ENCODE measurements at regions of chr2 and their contacts with region 1.

Region 1: DNA sequence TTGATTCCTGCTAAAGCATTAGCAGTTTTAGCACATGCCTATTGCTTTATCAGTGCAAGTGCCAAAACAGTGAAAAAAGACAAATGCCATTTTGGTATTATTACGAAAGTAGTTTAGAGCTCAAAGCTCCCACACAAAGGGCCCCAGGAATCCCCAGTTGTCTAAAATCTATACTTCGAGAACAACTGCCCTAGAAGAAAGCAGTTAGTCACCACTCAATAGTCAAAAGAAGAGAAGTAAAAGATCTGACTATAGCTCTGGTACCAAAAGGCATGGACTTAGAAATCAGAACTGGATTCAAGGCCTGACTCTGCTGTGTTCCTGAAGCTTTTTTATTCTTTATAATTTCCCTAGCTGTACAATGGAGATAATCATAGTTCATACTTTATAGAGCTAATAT is 21.8 kb downstream of the SCN3A start:
- DNase-seq: no peak
- H3K4me3 ChIP-seq: no peak overlapping the region
- H3K27ac ChIP-seq: no peak overlapping the region
- H3K4me1 ChIP-seq: no peaks in the 10 kb centered on the region
- CTCF ChIP-seq: no peak

Region 2: GRCh38 chr2:165197346-165197745 is 15.3 kb after region 1 on chr2:
- CTCF ChIA-PET with region 1: no interaction called
- POLR2A ChIA-PET with region 1: interaction called, 12 read pairs
- intact Hi-C with region 1: no loop called
- DNase-seq: no peak
- H3K4me3 ChIP-seq: peak overlapping the region; percentile 25
- H3K27ac ChIP-seq: peak overlapping the region; percentile 46
- H3K4me1 ChIP-seq: peaks cover 94% of the 10 kb centered on the region
- CTCF ChIP-seq: no peak